PC-3 (cell line): ENCODE measurements at regions of chr6 and their contacts with region 1.

Region 1: DNA sequence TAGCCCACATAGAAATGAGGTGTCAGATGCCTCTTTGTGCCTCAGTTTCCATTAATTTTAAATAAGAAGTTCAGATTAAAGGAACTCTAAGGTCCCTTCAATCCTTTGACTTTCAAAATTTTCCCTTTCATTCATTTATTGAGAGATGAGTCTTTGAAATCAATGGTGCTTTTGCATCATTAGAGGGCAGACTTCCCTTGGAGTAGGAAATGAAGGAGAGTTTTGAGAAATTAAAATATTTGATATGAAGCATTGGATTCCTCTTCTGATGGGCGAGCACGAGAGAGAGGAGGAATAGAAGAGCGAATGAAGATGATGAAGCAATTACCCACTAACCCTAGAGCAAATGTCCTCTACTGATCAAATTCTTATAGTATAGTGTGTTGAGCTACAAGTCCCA is 105.7 kb downstream of the EDN1 start:
- DNase-seq: peak; percentile 24
- ATAC-seq: no peak
- H3K4me3 ChIP-seq: no peak overlapping the region
- H3K27ac ChIP-seq: no peak overlapping the region
- H3K4me1 ChIP-seq: no peaks in the 10 kb centered on the region
- H3K27me3 ChIP-seq: no peaks in the 10 kb centered on the region
- CTCF ChIP-seq: peak; percentile 63

Region 2: GRCh38 chr6:12472601-12473038 is 76.7 kb after region 1 on chr6:
- CTCF ChIA-PET with region 1: no interaction called
- POLR2A ChIA-PET with region 1: no interaction called
- intact Hi-C with region 1: no loop called
- DNase-seq: peak; percentile 74
- ATAC-seq: peak; percentile 18; the same call in 1 of the 2 replicates
- H3K4me3 ChIP-seq: no peak overlapping the region
- H3K27ac ChIP-seq: no peak overlapping the region
- H3K4me1 ChIP-seq: peaks cover 12% of the 10 kb centered on the region; the same call in 1 of the 2 replicates
- H3K27me3 ChIP-seq: no peaks in the 10 kb centered on the region
- CTCF ChIP-seq: no peak

Region 3: DNA sequence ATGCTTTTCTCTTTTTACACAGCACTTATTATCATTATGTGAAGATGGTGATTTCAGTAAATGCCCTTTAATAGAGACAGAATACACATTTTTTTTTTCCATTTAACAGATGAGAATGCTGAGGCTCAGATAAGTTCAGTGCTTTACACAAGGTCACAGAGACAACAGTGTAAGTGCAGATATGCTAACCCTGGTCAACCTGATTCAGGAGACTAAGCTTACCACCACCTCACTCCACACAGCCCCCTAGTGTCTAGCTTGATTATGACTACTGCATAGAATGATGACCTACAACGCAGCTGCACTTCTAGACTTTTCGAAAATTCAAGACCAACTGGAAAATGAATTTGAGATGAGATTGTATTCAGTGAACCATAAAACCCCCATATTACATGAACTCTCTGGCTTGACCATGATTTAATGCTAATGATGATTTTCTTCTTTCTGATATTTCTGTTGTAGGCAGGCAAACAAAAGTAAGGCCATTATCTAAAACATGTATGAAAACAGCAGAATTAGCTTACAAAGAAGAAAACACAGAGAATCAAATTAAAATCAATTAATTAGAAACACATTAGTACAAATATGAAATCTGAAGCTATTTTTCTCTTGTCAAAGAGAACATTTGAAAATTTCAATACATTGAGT is 108.5 kb after region 1 on chr6:
- CTCF ChIA-PET with region 1: no interaction called
- POLR2A ChIA-PET with region 1: no interaction called
- intact Hi-C with region 1: loop called (anchors 5 kb)
- DNase-seq: peak; percentile 74
- ATAC-seq: peak; percentile 49
- H3K4me3 ChIP-seq: no peak overlapping the region
- H3K27ac ChIP-seq: no peak overlapping the region
- H3K4me1 ChIP-seq: no peaks in the 10 kb centered on the region
- H3K27me3 ChIP-seq: no peaks in the 10 kb centered on the region
- CTCF ChIP-seq: peak; percentile 81